CD8-positive, alpha-beta memory T cell (primary cell): ENCODE measurements at regions of chr14 and their contacts with region 1.

Region 1: DNA sequence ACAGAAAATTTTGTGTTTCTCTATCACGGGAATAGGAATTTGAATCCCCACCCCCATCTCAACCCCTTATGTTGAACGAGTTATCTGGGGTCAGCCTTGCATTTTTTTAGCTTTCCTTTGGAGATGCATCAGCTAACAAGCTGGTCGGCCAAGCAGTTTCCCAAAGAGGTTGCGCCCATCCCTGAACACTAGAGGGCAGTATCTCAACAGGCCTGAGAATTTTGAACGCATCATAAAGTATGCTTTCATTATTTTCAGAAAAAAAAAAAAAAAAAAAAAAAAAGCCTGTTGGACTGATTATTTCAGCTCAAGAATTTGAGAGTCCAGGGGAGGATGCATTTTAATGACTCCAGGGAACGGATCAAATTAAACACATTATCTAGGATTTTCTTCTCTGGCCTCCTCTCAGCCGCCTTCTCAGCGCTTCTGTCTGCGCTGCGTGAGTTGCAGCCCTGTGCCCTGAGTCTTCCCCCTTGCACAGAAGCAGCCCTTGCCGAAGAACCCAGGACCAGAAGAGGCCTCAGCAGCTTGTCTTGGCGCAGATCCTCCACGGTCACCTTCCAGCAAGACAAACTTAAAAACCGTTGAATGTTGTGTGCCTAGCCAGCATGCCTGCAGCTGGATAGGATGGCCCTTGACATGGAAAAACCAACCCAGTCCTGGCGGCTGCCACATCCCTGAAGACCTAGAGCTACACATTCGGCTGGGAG is 76.6 kb upstream of the GZMB start:
- DNase-seq: peak; percentile 32 to 69 (median 39)
- H3K4me3 ChIP-seq: no peak overlapping the region
- H3K4me3 Mint-ChIP-seq: no peak overlapping the region
- H3K27ac ChIP-seq: no peak overlapping the region
- H3K27ac Mint-ChIP-seq: no peak overlapping the region
- H3K4me1 ChIP-seq: no peaks in the 10 kb centered on the region
- H3K4me1 Mint-ChIP-seq: peaks cover 7 to 9% (median 9%) of the 10 kb centered on the region in 3 donors
- H3K27me3 ChIP-seq: no peaks in the 10 kb centered on the region
- H3K27me3 Mint-ChIP-seq: peaks cover 8% of the 10 kb centered on the region in 2 donors

Region 2: DNA sequence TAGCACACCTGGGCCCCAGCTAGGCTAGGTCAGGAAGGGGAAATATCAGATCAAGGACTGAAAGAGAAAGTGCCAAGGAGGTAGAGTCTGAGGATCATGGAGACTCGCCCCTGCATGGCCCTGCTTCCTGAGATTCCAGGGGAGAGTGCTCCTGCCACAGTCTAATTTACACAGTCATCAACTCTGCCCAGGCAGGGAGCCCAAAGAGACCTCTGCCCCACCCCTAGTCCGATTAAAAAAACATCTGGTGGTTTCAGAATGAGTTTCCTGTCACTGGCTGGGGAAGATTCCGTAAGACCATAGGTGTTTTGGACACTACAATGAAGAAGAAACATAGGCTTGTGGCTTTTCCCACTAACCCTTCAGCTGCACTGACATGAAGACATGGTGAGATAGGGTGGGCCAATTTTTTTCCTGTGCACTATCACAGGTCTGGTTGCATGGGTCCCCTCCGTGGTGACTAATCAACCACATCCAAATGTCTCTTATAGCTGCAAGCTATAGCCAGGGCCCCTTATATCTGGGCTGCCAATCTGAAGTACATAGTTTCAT is 45.0 kb before region 1 on chr14:
- CTCF ChIA-PET with region 1: no interaction called
- POLR2A ChIA-PET with region 1: no interaction called
- DNase-seq: peak in 2 of 5 donors; percentile 23 to 52
- H3K4me3 ChIP-seq: no peak overlapping the region
- H3K4me3 Mint-ChIP-seq: peak overlapping the region in 6 of 7 donors; percentile 51 to 80 (median 62)
- H3K27ac ChIP-seq: no peak overlapping the region
- H3K27ac Mint-ChIP-seq: peak overlapping the region in 7 of 8 donors; percentile 3 to 93 (median 74)
- H3K4me1 ChIP-seq: peaks cover 16% of the 10 kb centered on the region
- H3K4me1 Mint-ChIP-seq: peaks cover 47 to 69% (median 57%) of the 10 kb centered on the region in 3 donors
- H3K27me3 ChIP-seq: no peaks in the 10 kb centered on the region
- H3K27me3 Mint-ChIP-seq: peaks cover 0 to 6% of the 10 kb centered on the region in 2 donors

Region 3: DNA sequence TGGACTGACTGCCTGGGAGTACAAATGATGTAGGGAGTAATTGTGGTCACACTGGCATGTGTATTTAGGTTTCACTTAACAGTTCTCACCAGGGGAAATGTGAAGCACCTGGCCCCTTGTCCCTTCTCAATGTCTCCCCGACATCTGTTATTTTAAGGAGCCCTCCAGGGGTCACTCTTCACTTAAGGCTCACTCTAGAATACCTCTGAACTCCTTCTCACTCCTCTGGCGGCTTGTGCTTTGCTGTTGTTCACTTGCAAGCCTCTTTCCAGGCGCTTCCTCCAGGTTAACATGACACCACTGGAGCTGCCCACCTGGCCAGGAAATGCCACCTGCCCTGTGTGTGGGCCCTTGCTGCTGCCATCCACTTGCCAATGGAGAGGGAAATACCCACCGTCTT is 20.1 kb before region 1 on chr14:
- CTCF ChIA-PET with region 1: interaction called, 18 read pairs
- POLR2A ChIA-PET with region 1: interaction called, 8 read pairs
- DNase-seq: peak in 1 of 5 donors; percentile 24
- H3K4me3 ChIP-seq: no peak overlapping the region
- H3K4me3 Mint-ChIP-seq: no peak overlapping the region
- H3K27ac ChIP-seq: no peak overlapping the region
- H3K27ac Mint-ChIP-seq: peak overlapping the region in 2 of 8 donors; percentile 24 to 33
- H3K4me1 ChIP-seq: peaks cover 39% of the 10 kb centered on the region
- H3K4me1 Mint-ChIP-seq: peaks cover 29 to 39% (median 31%) of the 10 kb centered on the region in 3 donors
- H3K27me3 ChIP-seq: no peaks in the 10 kb centered on the region
- H3K27me3 Mint-ChIP-seq: no peaks in the 10 kb centered on the region

Region 4: GRCh38 chr14:24699052-24699451 is 11.5 kb before region 1 on chr14:
- CTCF ChIA-PET with region 1: interaction called, 19 read pairs
- POLR2A ChIA-PET with region 1: no interaction called
- DNase-seq: no peak
- H3K4me3 ChIP-seq: no peak overlapping the region
- H3K4me3 Mint-ChIP-seq: peak overlapping the region in 1 of 7 donors; percentile 10
- H3K27ac ChIP-seq: no peak overlapping the region
- H3K27ac Mint-ChIP-seq: peak overlapping the region in 2 of 8 donors; percentile 12 to 18
- H3K4me1 ChIP-seq: peaks cover 35% of the 10 kb centered on the region
- H3K4me1 Mint-ChIP-seq: peaks cover 11 to 17% (median 13%) of the 10 kb centered on the region in 3 donors
- H3K27me3 ChIP-seq: no peaks in the 10 kb centered on the region
- H3K27me3 Mint-ChIP-seq: no peaks in the 10 kb centered on the region

Region 5: DNA sequence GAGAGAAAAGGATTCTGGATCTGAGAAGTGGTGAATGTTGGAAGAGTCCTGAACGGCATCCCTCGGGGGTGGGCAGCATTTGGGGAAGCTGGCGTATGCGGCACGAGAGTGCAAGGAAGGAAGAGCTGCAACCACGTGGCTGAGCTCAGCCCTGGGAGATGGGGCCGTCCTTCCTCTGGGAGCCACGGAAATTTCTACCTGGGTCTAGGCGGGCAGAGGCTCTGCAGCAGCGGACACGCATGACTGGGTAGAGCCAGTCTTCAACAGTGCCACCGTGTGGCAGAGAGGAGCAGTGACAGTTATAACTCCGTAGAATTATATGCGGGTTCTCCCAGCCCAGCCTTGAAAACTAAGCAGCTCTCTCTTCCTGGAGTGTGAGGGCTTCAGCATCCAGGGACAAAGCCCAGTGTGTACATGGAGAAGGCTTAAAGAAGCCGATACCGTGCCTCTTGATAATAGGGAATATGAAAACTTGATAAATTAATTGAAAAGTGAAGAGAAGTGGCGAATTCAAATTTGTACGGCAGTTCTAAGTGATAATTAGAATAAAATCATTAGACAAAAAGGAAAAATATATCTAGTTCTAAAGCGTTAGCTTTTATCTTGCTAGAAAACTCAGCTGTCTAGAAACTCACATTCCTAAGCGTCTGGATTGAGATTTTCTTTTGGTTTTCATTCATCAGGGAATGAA is 422.3 kb after region 1 on chr14:
- CTCF ChIA-PET with region 1: interaction called, 24 read pairs
- POLR2A ChIA-PET with region 1: no interaction called
- DNase-seq: peak; percentile 11 to 54 (median 21)
- H3K4me3 ChIP-seq: no peak overlapping the region
- H3K4me3 Mint-ChIP-seq: no peak overlapping the region
- H3K27ac ChIP-seq: no peak overlapping the region
- H3K27ac Mint-ChIP-seq: no peak overlapping the region
- H3K4me1 ChIP-seq: no peaks in the 10 kb centered on the region
- H3K4me1 Mint-ChIP-seq: peaks cover 4% of the 10 kb centered on the region in 3 donors
- H3K27me3 ChIP-seq: peaks cover 3% of the 10 kb centered on the region
- H3K27me3 Mint-ChIP-seq: peaks cover 31 to 58% of the 10 kb centered on the region in 2 donors